ENCODE measurements at regions of chr4 and their contacts with region 1.

Region 1: GRCh38 chr4:137819964-137820383 is 287.7 kb upstream of the PCDH18 start:
- DNase-seq: no peak
- H3K4me3 Mint-ChIP-seq: no peak overlapping the region
- H3K27ac Mint-ChIP-seq: no peak overlapping the region
- H3K4me1 Mint-ChIP-seq: no peaks in the 10 kb centered on the region
- H3K27me3 Mint-ChIP-seq: no peaks in the 10 kb centered on the region

Region 2: DNA sequence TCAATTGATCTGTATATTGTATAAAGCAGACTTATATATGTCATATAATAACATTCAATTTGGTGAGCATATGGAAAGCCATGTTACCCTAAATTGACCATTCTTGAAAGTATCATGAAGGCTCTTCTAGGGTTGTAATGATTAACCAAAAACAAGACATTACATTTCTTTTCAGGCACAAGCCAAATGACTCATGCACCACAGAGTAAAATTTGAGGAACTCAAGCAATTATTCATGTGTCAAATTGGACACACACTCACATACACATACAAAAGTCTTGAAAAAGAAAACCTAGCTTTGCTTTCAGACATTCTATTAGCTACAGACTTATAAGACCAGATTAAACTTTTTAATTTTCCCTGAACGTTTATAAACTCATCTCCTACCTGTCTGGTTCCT is 141.2 kb before region 1 on chr4:
- intact Hi-C with region 1: no loop called
- DNase-seq: no peak
- H3K4me3 Mint-ChIP-seq: no peak overlapping the region
- H3K27ac Mint-ChIP-seq: no peak overlapping the region
- H3K4me1 Mint-ChIP-seq: no peaks in the 10 kb centered on the region
- H3K27me3 Mint-ChIP-seq: no peaks in the 10 kb centered on the region

Region 3: DNA sequence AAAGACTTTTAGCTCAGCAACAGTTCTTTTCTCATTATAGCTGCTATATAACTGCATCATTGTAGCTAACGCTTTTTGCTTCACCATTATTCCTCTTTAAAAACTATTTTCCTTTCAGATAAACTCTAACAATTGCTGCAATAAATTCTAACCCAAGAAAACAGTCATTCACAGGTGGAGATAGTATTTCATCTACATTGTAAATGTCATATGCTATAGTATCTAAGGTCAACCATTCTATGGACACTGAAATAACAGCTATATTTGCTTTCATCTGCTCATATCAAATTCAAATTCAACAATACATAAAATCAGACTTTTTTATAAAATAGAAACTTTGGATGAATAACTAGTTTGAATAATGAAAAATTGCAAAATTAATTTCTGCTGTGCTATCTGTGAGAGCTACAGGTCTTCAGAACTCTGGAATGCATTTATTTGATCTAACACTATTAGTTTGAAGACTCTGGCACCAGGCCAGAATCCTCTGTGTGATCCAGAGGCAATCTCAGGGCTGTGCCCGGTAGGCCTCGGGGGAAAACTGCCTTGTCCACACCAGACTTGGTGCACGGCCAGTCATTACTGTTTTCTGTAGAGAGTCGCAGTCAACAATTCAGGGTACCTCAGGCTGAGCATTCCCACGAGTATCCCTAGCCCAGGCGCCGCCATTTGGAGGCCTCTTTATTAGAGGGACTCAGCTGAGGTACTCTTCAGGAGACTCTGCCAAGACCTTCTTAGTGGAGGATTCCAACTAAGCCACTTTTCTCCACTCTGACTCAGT is 89.7 kb after region 1 on chr4:
- intact Hi-C with region 1: no loop called
- DNase-seq: no peak
- H3K4me3 Mint-ChIP-seq: no peak overlapping the region
- H3K27ac Mint-ChIP-seq: no peak overlapping the region
- H3K4me1 Mint-ChIP-seq: no peaks in the 10 kb centered on the region
- H3K27me3 Mint-ChIP-seq: no peaks in the 10 kb centered on the region

Region 4: DNA sequence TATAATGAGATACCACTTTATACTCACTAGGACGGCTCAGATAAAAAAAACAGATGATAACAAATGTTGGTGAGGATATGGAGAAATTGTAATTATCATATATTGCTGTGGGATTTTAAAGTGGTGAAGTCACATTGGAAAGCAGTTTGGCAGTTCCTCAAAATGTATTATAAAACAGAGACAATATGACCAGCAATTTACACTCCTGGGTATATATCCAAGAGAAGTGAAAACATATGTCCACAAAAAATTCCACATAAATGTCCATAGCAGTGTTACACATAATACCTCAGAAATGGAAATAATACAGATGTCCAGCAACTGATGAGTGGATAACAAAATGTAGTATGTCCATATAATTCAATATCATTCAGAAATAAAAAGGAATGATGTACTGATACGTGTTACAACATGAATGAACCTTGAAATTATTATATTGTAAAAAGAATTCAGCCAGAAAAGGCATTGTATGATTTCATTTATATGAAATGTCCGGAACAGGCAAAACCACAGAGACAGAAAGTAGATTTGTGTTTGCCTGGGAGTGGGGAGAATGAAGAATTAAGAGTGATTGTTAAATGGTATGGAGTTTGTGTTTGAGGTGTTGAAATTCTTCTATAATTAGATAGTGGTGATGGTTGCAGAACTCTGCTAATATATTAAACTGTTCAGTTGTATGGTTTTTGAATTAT is 201.3 kb after region 1 on chr4:
- intact Hi-C with region 1: no loop called
- DNase-seq: no peak
- H3K4me3 Mint-ChIP-seq: no peak overlapping the region
- H3K27ac Mint-ChIP-seq: no peak overlapping the region
- H3K4me1 Mint-ChIP-seq: no peaks in the 10 kb centered on the region
- H3K27me3 Mint-ChIP-seq: no peaks in the 10 kb centered on the region

Region 5: GRCh38 chr4:138090150-138090917 is 270.4 kb after region 1 on chr4:
- intact Hi-C with region 1: loop called (anchors 5 kb)
- DNase-seq: peak; percentile 5
- H3K4me3 Mint-ChIP-seq: no peak overlapping the region
- H3K27ac Mint-ChIP-seq: no peak overlapping the region
- H3K4me1 Mint-ChIP-seq: no peaks in the 10 kb centered on the region
- H3K27me3 Mint-ChIP-seq: no peaks in the 10 kb centered on the region

Measured in activated T-helper 1 cell treated with anti-CD3 and anti-CD28 coated beads, Interleukin-12 subunit alpha, Interleukin-12 subunit beta, Interleukin-2, Interleukin-4 antibody, amounts not matched to agents 30 ng/mL and 10 ng/mL and 1 ng/mL, durations not matched to agents 14 hours and 24 hours and 36 hours (primary cell).